Psoas muscle (tissue), 8 donors: ENCODE measurements at regions of chr6 and their contacts with region 1.

Region 1: GRCh38 chr6:157756708-157757429 is 66.2 kb upstream of the SNX9 start:
- DNase-seq: peak; percentile 89 to 92
- ATAC-seq: peak; percentile 86 to 97 (median 92)
- H3K4me3 ChIP-seq: peak overlapping the region; percentile 37
- H3K27ac ChIP-seq: no peak overlapping the region
- H3K4me1 ChIP-seq: peaks cover 9% of the 10 kb centered on the region
- H3K27me3 ChIP-seq: no peaks in the 10 kb centered on the region
- CTCF ChIP-seq: peak; percentile 78

Region 2: GRCh38 chr6:157514659-157515496 is 242.0 kb before region 1 on chr6:
- intact Hi-C with region 1: no loop called
- DNase-seq: peak; percentile 53 to 78
- ATAC-seq: peak; percentile 92 to 97 (median 94)
- H3K4me3 ChIP-seq: no peak overlapping the region
- H3K27ac ChIP-seq: peak overlapping the region; percentile 79
- H3K4me1 ChIP-seq: peaks cover 24% of the 10 kb centered on the region
- H3K27me3 ChIP-seq: no peaks in the 10 kb centered on the region
- CTCF ChIP-seq: no peak

Region 3: DNA sequence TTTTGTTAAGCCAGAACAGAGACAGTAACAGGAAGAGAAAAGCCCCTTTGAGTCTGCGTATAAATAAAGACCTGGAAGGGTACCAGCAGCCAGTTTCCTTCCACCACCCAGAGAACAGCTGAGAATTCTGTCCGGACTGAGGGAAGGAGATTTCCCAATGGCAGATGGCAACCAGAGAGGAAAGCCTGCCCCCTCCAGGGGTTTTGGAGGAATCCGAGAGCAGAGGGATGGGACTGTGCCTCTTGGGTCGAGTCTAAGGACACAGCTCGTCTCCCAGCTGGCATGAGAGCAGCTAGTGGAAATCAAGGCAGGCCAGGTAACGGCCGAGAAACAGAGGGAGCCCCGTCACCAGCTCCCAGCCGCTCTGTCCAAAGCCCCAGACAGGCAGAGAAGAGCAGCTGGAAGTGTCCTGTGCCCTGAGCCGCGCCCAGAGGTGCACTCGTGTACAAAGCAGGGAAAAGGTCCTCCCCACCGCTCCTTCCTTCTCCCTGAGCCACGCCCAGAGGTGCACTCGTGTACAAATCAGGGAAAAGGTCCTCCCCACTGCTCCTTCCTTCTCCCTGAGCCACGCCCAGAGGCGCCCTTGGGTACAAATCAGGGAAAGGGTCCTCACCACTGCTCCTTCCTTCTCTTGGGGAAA is 67.8 kb before region 1 on chr6:
- intact Hi-C with region 1: no loop called
- DNase-seq: no peak
- ATAC-seq: peak; percentile 88 to 94 (median 90)
- H3K4me3 ChIP-seq: peak overlapping the region; percentile 42
- H3K27ac ChIP-seq: peak overlapping the region; percentile 82
- H3K4me1 ChIP-seq: peaks cover 11% of the 10 kb centered on the region
- H3K27me3 ChIP-seq: peaks cover 0 to 4% (median 0%) of the 10 kb centered on the region in 3 donors
- CTCF ChIP-seq: peak; percentile 30

Region 4: GRCh38 chr6:157800420-157801237 is 43.8 kb after region 1 on chr6:
- intact Hi-C with region 1: no loop called
- DNase-seq: no peak
- ATAC-seq: no peak
- H3K4me3 ChIP-seq: no peak overlapping the region
- H3K27ac ChIP-seq: no peak overlapping the region
- H3K4me1 ChIP-seq: no peaks in the 10 kb centered on the region
- H3K27me3 ChIP-seq: no peaks in the 10 kb centered on the region
- CTCF ChIP-seq: no peak

Region 5: GRCh38 chr6:157813757-157814455 is 57.0 kb after region 1 on chr6:
- intact Hi-C with region 1: no loop called
- DNase-seq: no peak
- ATAC-seq: peak; percentile 19 to 72 (median 52)
- H3K4me3 ChIP-seq: no peak overlapping the region
- H3K27ac ChIP-seq: peak overlapping the region; percentile 60
- H3K4me1 ChIP-seq: no peaks in the 10 kb centered on the region
- H3K27me3 ChIP-seq: no peaks in the 10 kb centered on the region
- CTCF ChIP-seq: no peak

Region 6: DNA sequence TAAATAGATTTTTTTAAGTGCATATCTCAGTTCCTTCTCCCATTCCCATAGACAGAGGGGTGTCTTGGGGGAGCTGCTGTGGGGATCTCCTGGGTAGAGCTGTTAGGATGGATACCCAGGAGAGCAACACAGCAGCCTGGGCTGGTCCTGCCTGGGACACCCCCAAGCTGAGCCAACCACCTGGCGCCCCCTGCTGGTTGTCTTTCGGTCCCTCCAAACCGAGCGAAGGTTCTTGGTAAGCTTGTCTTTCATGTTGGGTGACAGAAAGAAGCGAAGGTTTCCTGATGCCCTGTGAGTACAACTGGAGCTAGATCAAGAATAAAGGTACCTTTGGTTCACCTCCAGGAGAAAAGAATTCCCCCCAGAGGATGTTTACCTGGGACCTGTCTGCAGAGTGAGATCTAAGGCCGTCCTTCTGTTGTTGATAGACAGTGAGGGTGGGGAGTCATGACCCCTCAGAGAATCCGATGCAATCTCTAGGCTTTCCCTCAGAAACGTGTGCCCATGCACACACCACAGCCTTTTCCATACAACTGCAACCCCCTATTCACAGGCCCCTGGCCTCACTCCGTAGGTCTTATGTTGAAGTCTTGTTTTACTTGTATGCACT is 117.0 kb after region 1 on chr6:
- intact Hi-C with region 1: loop called (anchors 2 kb)
- DNase-seq: peak; percentile 76 to 81
- ATAC-seq: peak; percentile 79 to 86 (median 86)
- H3K4me3 ChIP-seq: no peak overlapping the region
- H3K27ac ChIP-seq: no peak overlapping the region
- H3K4me1 ChIP-seq: no peaks in the 10 kb centered on the region
- H3K27me3 ChIP-seq: peaks cover 0 to 3% (median 0%) of the 10 kb centered on the region in 3 donors
- CTCF ChIP-seq: peak; percentile 82